Activated CD4-positive, alpha-beta T cell treated with anti-CD3 and anti-CD28 coated beads, Interleukin-2, amount 10 ng/mL, durations not matched to agents 7 days and 5 days (primary cell): ENCODE measurements at regions of chr12 and their contacts with region 1.

Region 1: GRCh38 chr12:48851883-48852733 is at the start of gene DDX23:
- DNase-seq: peak; percentile 95
- H3K4me3 Mint-ChIP-seq: peak within 1 kb of the TSS; percentile 97
- H3K27ac Mint-ChIP-seq: peak within 1 kb of the TSS; percentile 95
- H3K4me1 Mint-ChIP-seq: peaks cover 36% of the 10 kb centered on the region
- H3K27me3 Mint-ChIP-seq: no peaks in the 10 kb centered on the region
- total RNA-seq, gene DDX23: 143 to 144 TPM

Region 2: DNA sequence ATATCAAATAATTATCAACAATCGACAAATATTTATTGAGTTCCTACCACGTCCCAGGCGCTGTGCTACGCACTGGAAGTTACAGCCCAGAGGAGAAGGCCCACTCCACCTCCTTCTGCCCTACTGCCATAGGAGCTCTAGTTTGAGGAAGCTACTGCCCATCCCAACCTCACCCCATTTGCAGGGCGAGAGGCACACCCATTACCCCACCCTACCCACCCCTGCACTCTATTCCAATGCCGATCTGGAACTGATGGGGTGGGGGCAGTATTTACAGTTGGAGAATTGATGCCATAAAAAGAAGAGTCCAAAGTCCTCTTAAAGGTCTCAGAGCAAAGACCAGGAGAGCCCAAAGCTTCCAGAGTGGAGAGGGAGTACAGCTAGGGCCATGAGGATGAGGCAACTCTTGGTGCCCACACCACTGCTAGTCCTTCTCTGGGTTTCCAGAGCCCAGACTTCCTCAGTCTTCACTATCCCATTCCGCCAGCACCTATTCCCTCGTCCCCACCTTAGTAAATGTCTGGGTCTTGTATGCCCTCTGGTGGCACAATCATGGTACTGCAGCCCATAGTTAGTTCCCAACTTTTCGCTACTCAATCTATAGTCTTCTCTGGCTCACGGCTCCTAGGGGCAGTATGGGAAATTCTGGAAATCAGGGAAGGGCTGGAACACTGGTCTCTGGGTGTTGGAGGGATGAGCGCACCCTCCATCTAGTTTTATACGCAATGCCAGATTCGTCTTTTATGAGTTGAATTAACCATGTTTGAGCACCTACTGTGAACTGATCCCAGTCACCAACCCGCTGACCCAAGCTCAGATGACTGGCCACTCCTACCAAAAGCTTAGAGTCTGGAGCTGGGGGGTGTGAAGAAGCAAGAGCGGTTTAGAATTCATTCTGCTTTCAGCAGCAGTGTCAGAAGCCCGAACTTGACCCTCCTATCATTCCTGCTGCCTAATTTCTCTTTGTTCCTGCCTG is 56.3 kb before region 1 on chr12:
- CTCF ChIA-PET with region 1: no interaction called
- POLR2A ChIA-PET with region 1: no interaction called
- DNase-seq: peak; percentile 60
- H3K4me3 Mint-ChIP-seq: no peak overlapping the region
- H3K27ac Mint-ChIP-seq: no peak overlapping the region
- H3K4me1 Mint-ChIP-seq: peaks cover 5% of the 10 kb centered on the region
- H3K27me3 Mint-ChIP-seq: peaks cover 9% of the 10 kb centered on the region

Region 3: GRCh38 chr12:48824112-48824511 is 28.0 kb before region 1 on chr12:
- CTCF ChIA-PET with region 1: interaction called, 12 read pairs
- POLR2A ChIA-PET with region 1: no interaction called
- DNase-seq: no peak
- H3K4me3 Mint-ChIP-seq: no peak overlapping the region
- H3K27ac Mint-ChIP-seq: no peak overlapping the region
- H3K4me1 Mint-ChIP-seq: peaks cover 1% of the 10 kb centered on the region
- H3K27me3 Mint-ChIP-seq: peaks cover 4% of the 10 kb centered on the region

Region 4: GRCh38 chr12:48882315-48882687 is 30.2 kb after region 1 on chr12:
- CTCF ChIA-PET with region 1: interaction called, 12 read pairs
- POLR2A ChIA-PET with region 1: no interaction called
- DNase-seq: no peak
- H3K4me3 Mint-ChIP-seq: no peak overlapping the region
- H3K27ac Mint-ChIP-seq: no peak overlapping the region
- H3K4me1 Mint-ChIP-seq: peaks cover 8% of the 10 kb centered on the region
- H3K27me3 Mint-ChIP-seq: peaks cover 37% of the 10 kb centered on the region

Region 5: DNA sequence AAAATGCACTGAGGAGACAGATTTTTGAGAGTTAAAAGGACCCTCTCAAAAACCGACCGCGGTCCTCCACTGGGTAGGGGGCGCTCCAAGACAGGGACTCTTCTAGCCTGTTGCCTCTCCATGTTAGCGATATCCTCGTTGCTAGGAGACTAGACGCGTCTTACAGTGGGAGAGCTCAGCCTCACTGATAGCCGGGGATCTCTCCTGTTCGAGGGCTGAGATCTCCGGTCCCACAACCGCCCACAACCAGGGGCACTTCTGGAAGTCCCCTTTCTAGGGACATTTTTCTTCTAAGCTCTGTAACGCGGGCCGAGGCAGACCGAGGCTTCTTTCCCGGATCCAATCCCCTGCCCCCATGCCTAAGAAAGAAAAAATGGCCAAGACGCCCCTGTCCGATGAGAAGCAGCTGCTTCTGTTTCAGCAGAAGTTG is 51.9 kb after region 1 on chr12:
- CTCF ChIA-PET with region 1: interaction called, 18 read pairs
- POLR2A ChIA-PET with region 1: interaction called, 3 read pairs
- DNase-seq: peak; percentile 91
- H3K4me3 Mint-ChIP-seq: peak overlapping the region; percentile 70
- H3K27ac Mint-ChIP-seq: no peak overlapping the region
- H3K4me1 Mint-ChIP-seq: peaks cover 12% of the 10 kb centered on the region
- H3K27me3 Mint-ChIP-seq: peaks cover 9% of the 10 kb centered on the region

Region 6: GRCh38 chr12:48988030-48988649 is 136.0 kb after region 1 on chr12:
- CTCF ChIA-PET with region 1: interaction called, 21 read pairs
- POLR2A ChIA-PET with region 1: no interaction called
- DNase-seq: peak; percentile 76
- H3K4me3 Mint-ChIP-seq: no peak overlapping the region
- H3K27ac Mint-ChIP-seq: no peak overlapping the region
- H3K4me1 Mint-ChIP-seq: peaks cover 8% of the 10 kb centered on the region
- H3K27me3 Mint-ChIP-seq: peaks cover 54% of the 10 kb centered on the region